PC-9 (cell line): ENCODE measurements at regions of chr16 and their contacts with region 1.

Region 1: GRCh38 chr16:75265845-75266701 is 14.6 kb upstream of the BCAR1 start:
- DNase-seq: peak; percentile 76 to 91
- H3K4me3 ChIP-seq: peak overlapping the region; percentile 99
- H3K27ac ChIP-seq: peak overlapping the region; percentile 58
- H3K4me1 ChIP-seq: peaks cover 43% of the 10 kb centered on the region
- H3K27me3 ChIP-seq: no peaks in the 10 kb centered on the region
- CTCF ChIP-seq: no peak

Region 2: GRCh38 chr16:75234856-75235696 is 31.0 kb before region 1 on chr16:
- CTCF ChIA-PET with region 1: no interaction called
- POLR2A ChIA-PET with region 1: no interaction called
- intact Hi-C with region 1: loop called (anchors 1 kb)
- DNase-seq: no peak
- H3K4me3 ChIP-seq: no peak overlapping the region
- H3K27ac ChIP-seq: no peak overlapping the region
- H3K4me1 ChIP-seq: peaks cover 12% of the 10 kb centered on the region
- H3K27me3 ChIP-seq: no peaks in the 10 kb centered on the region
- CTCF ChIP-seq: no peak

Region 3: GRCh38 chr16:75377729-75378386 is 111.8 kb after region 1 on chr16:
- CTCF ChIA-PET with region 1: no interaction called
- POLR2A ChIA-PET with region 1: no interaction called
- intact Hi-C with region 1: loop called (anchors 2 kb)
- DNase-seq: peak; percentile 49 to 98
- H3K4me3 ChIP-seq: peak overlapping the region; percentile 1; the same call in 1 of the 2 replicates
- H3K27ac ChIP-seq: peak overlapping the region; percentile 54
- H3K4me1 ChIP-seq: peaks cover 51% of the 10 kb centered on the region
- H3K27me3 ChIP-seq: no peaks in the 10 kb centered on the region
- CTCF ChIP-seq: no peak

Region 4: DNA sequence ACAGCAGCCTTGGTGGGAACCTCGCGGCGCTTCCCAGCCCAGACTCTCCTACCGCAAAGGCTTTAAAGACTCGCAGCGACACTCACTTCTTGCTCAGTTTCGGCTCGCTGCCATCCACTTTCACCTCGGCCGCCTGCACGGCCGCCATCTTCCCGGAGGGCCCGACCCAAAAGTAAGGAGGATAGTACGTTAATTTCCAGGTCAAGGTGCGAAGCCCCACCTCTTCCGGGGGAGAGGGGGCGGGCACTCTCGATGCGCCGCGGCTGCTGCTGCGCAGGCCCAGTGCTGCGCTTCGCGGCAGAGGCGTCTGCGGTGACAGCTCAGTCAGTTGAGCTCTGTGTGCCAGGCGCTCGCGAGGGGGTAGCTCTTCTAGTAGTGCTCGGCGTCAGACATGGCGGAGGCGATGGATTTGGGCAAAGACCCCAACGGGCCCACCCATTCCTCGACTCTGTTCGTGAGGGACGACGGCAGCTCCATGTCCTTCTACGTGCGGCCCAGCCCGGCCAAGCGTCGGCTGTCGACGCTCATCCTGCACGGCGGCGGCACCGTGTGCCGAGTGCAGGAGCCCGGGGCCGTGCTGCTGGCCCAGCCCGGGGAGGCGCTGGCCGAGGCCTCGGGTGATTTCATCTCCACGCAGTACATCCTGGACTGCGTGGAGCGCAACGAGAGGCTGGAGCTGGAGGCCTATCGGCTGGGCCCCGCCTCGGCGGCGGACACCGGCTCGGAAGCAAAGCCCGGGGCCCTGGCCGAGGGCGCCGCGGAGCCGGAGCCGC is 381.6 kb after region 1 on chr16 and contains the starts of genes KARS1 and TERF2IP:
- CTCF ChIA-PET with region 1: no interaction called
- POLR2A ChIA-PET with region 1: no interaction called
- intact Hi-C with region 1: no loop called
- DNase-seq: peak; percentile 83 to 91
- H3K4me3 ChIP-seq: peak within 1 kb of the TSS; percentile 98
- H3K27ac ChIP-seq: peak within 1 kb of the TSS; percentile 67
- H3K4me1 ChIP-seq: peaks cover 27% of the 10 kb centered on the region
- H3K27me3 ChIP-seq: no peaks in the 10 kb centered on the region
- CTCF ChIP-seq: no peak
- total RNA-seq, gene KARS1: 101 and 132 TPM in 2 replicates
- total RNA-seq, gene TERF2IP: 16.9 and 19.3 TPM in 2 replicates